ENCODE measurements at regions of chr6 and their contacts with region 1.

Region 1: DNA sequence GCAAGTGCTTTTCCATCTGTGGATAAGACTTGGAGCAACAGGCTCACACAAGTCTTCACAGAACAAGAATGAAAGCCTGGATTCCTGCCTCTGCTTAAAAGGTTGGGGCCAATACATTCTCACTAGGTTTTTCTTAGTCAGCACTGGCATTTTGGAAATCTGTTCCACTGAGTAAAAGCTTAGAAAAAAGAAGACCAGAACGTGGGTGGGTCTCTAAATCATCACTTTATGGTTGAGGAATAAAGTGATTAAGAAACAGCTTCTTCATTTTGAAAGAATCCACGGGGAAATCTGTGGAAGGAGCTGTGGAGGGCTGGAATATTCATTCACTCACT is 10.7 kb downstream of the PPP1R14C start:
- DNase-seq: no peak
- ATAC-seq: no peak
- H3K4me3 ChIP-seq: no peak overlapping the region
- H3K27ac ChIP-seq: no peak overlapping the region
- H3K4me1 ChIP-seq: peaks cover 35 to 58% of the 10 kb centered on the region in 2 experiments
- H3K27me3 ChIP-seq: no peaks in the 10 kb centered on the region
- CTCF ChIP-seq: no peak
- EP300 ChIP-seq: no peak
- POLR2A ChIP-seq: no peak
- RAD21 ChIP-seq: no peak

Region 2: GRCh38 chr6:150112233-150112632 is 41.3 kb before region 1 on chr6:
- CTCF ChIA-PET with region 1: no interaction called
- POLR2A ChIA-PET with region 1: no interaction called
- in situ Hi-C with region 1: no loop called
- intact Hi-C with region 1: no loop called
- DNase-seq: peak in 1 of 4 experiments; percentile 15
- ATAC-seq: peak; percentile 44
- H3K4me3 ChIP-seq: no peak overlapping the region
- H3K27ac ChIP-seq: no peak overlapping the region
- H3K4me1 ChIP-seq: peaks cover 0 to 5% of the 10 kb centered on the region in 2 experiments; a peak in 3 of 5 replicates
- H3K27me3 ChIP-seq: peaks cover 15 to 46% of the 10 kb centered on the region in 2 experiments; a peak in 4 of 5 replicates
- CTCF ChIP-seq: no peak
- EP300 ChIP-seq: no peak
- POLR2A ChIP-seq: no peak
- RAD21 ChIP-seq: no peak

Region 3: GRCh38 chr6:150142670-150143515 is 10.6 kb before region 1 on chr6 and contains the start of gene PPP1R14C:
- CTCF ChIA-PET with region 1: no interaction called
- POLR2A ChIA-PET with region 1: interaction called, 20 read pairs
- in situ Hi-C with region 1: no loop called
- intact Hi-C with region 1: no loop called
- DNase-seq: peak; percentile 67 to 92 (median 84)
- ATAC-seq: peak; percentile 82
- H3K4me3 ChIP-seq: peak within 1 kb of the TSS; percentile 64
- H3K27ac ChIP-seq: peak within 1 kb of the TSS; percentile 9; the same call in 2 of the 3 replicates
- H3K4me1 ChIP-seq: peaks cover 29 to 30% of the 10 kb centered on the region in 2 experiments; a peak in 4 of 5 replicates
- H3K27me3 ChIP-seq: peaks cover 6 to 18% of the 10 kb centered on the region in 2 experiments; a peak in 4 of 5 replicates
- CTCF ChIP-seq: no peak
- EP300 ChIP-seq: no peak
- POLR2A ChIP-seq: no peak
- RAD21 ChIP-seq: no peak
- polyA plus RNA-seq, gene PPP1R14C: 8.1 to 14.5 TPM

Region 4: GRCh38 chr6:150273457-150274309 is 120.2 kb after region 1 on chr6:
- CTCF ChIA-PET with region 1: no interaction called
- POLR2A ChIA-PET with region 1: interaction called, 3 read pairs
- in situ Hi-C with region 1: no loop called
- intact Hi-C with region 1: loop called (anchors 2 kb)
- DNase-seq: peak in 1 of 4 experiments; percentile 59
- ATAC-seq: no peak
- H3K4me3 ChIP-seq: no peak overlapping the region
- H3K27ac ChIP-seq: peak overlapping the region; percentile 3; the same call in 2 of the 3 replicates
- H3K4me1 ChIP-seq: peaks cover 76 to 93% of the 10 kb centered on the region in 2 experiments
- H3K27me3 ChIP-seq: no peaks in the 10 kb centered on the region
- CTCF ChIP-seq: no peak
- EP300 ChIP-seq: peak; percentile 16; the same call in 1 of the 2 replicates
- POLR2A ChIP-seq: no peak
- RAD21 ChIP-seq: 0 out of 4 replicates have a peak, but pooled peaks of 1 of the 2 experiments have one; percentile 9

Region 5: DNA sequence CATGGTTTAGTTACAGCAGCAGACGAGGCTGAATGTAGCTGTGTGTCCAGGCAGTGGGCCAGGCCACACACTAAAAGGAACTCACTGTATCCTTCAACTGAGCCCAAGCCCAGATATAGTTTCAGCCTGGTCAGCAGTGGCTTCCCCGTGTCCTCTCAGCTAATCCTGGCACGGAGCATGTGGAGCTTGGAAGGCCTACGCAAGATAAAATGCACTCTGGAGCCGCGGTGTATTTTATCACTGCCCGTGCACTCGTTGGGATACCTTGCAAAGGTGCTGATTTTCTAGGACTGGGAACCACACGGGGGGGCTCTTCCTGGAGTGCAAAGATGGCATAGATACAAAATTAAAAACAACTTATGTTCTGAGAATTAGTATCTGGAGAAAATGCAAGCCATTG is 166.9 kb after region 1 on chr6:
- CTCF ChIA-PET with region 1: no interaction called
- POLR2A ChIA-PET with region 1: no interaction called
- in situ Hi-C with region 1: no loop called
- intact Hi-C with region 1: loop called (anchors 5 kb)
- DNase-seq: peak in 2 of 4 experiments; percentile 33 to 57
- ATAC-seq: peak; percentile 55
- H3K4me3 ChIP-seq: no peak overlapping the region
- H3K27ac ChIP-seq: no peak overlapping the region; the same call in 2 of the 3 replicates
- H3K4me1 ChIP-seq: peaks cover 10 to 38% of the 10 kb centered on the region in 2 experiments; a peak in 4 of 5 replicates
- H3K27me3 ChIP-seq: no peaks in the 10 kb centered on the region
- CTCF ChIP-seq: no peak; a peak in 1 of 6 replicates
- EP300 ChIP-seq: no peak
- POLR2A ChIP-seq: no peak
- RAD21 ChIP-seq: 0 out of 4 replicates have a peak, but pooled peaks of 1 of the 2 experiments have one; percentile 26

Measured in K562 (cell line).